SK-N-SH (cell line): ENCODE measurements at regions of chr1 and their contacts with region 1.

Region 1: DNA sequence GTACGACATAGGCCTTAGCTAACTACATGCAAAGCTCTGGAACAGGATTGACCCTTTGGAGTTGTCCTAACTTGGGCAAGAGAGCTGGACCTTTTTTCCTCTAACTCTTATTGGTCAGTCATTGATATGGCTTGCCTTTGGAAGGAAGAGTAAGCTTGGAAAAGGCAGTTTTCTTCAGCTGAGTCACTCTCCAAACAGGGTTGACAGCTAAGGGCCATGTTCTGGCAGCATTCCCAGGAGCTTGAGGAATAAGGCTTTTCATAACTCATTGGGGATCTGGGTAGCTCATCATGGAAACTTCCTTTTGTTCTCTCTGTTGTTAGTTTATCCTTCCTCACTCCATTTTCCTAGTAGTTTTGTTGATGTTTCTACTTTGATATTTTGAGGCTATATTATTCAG is 14.5 kb upstream of the ERRFI1 start:
- DNase-seq: no peak
- H3K4me3 ChIP-seq: no peak overlapping the region
- H3K27ac ChIP-seq: peak overlapping the region in 1 of 2 experiments; percentile 93; a peak in 2 of 4 replicates
- H3K4me1 ChIP-seq: peaks cover 0 to 10% of the 10 kb centered on the region in 2 experiments; a peak in 2 of 4 replicates
- H3K27me3 ChIP-seq: no peaks in the 10 kb centered on the region
- CTCF ChIP-seq: no peak
- EP300 ChIP-seq: no peak; a peak in 1 of 4 replicates
- RAD21 ChIP-seq: no peak

Region 2: GRCh38 chr1:8026153-8026975 is 14.2 kb before region 1 on chr1 and contains the start of gene ERRFI1:
- CTCF ChIA-PET with region 1: interaction called, 11 read pairs
- POLR2A ChIA-PET with region 1: no interaction called
- DNase-seq: peak; percentile 98
- H3K4me3 ChIP-seq: peak within 1 kb of the TSS; percentile 89 to 90
- H3K27ac ChIP-seq: peak within 1 kb of the TSS; percentile 68 to 89; a peak in 3 of 4 replicates
- H3K4me1 ChIP-seq: peaks cover 12 to 39% of the 10 kb centered on the region in 2 experiments; a peak in 3 of 4 replicates
- H3K27me3 ChIP-seq: no peaks in the 10 kb centered on the region
- CTCF ChIP-seq: no peak
- EP300 ChIP-seq: 0 out of 4 replicates have a peak, but pooled peaks of 1 of the 2 experiments have one; percentile 21
- RAD21 ChIP-seq: no peak
- polyA plus RNA-seq, gene ERRFI1: 65.6 and 66.9 TPM in 2 replicates

Region 3: DNA sequence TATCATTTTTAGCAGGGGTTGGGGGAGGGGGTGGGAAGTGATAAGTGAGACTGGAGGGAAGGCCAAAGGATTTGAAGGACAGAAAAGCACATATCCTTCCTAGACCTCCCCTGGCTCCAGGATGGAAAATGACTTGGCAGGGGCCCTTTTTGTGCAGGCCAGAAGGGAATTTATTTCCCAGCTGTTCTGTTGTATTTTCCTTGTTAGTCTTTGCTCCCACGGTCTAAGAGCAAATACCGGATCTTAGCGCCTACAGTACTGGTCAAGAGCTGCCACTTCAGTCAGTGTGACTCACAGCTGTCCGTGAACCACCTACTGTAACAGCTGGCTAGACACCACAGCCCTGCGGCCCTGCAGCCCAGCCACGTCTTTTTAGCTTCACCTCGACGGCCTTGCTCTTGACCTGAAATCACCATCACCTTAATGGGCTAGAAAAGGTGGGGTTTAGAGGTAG is 36.6 kb after region 1 on chr1:
- CTCF ChIA-PET with region 1: no interaction called
- POLR2A ChIA-PET with region 1: no interaction called
- DNase-seq: no peak
- H3K4me3 ChIP-seq: no peak overlapping the region
- H3K27ac ChIP-seq: peak overlapping the region in 1 of 2 experiments; percentile 78; a peak in 2 of 4 replicates
- H3K4me1 ChIP-seq: peaks cover 0 to 21% of the 10 kb centered on the region in 2 experiments; a peak in 2 of 4 replicates
- H3K27me3 ChIP-seq: no peaks in the 10 kb centered on the region
- CTCF ChIP-seq: no peak
- EP300 ChIP-seq: no peak
- RAD21 ChIP-seq: no peak